Heart right ventricle (tissue), 16 donors: ENCODE measurements at regions of chr14 and their contacts with region 1.

Region 1: DNA sequence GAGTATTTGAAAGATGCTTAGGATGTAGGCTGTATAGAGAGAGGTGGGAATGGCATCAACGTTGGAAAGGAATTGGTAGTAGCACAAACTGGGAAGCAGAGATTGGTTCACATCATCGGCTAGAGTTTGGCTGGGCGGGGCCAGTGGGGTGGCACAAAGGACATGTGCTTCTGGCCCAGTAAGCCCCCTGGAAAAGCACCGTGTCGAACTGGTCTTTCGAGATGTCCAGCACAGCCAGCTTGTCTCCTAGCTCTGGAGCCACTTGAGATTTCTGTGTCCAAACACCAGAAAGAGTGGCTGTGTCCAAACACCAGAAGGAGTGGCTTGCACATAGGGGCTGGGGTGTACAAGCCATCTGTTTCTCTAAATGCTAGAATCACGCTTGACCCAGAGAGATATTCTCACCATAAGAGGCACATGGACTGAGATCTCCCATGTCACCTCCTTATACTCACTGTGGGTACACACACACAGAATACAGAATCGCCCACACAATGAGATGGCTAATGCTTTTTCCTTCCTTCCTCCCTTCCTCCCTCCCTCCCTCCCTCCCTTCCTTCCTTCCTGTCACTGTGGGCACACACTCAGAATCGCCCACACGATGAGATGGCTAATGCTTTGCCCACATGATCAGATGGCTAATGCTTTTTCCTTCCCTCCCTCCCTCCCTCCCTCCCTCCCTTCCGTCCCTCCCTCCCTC is 41.8 kb upstream of the KCNK13 start:
- DNase-seq: no peak
- ATAC-seq: no peak
- H3K4me3 ChIP-seq: no peak overlapping the region
- H3K27ac ChIP-seq: no peak overlapping the region
- H3K4me1 ChIP-seq: peaks cover 0 to 3% (median 0%) of the 10 kb centered on the region in 9 donors
- H3K27me3 ChIP-seq: no peaks in the 10 kb centered on the region
- CTCF ChIP-seq: no peak

Region 2: DNA sequence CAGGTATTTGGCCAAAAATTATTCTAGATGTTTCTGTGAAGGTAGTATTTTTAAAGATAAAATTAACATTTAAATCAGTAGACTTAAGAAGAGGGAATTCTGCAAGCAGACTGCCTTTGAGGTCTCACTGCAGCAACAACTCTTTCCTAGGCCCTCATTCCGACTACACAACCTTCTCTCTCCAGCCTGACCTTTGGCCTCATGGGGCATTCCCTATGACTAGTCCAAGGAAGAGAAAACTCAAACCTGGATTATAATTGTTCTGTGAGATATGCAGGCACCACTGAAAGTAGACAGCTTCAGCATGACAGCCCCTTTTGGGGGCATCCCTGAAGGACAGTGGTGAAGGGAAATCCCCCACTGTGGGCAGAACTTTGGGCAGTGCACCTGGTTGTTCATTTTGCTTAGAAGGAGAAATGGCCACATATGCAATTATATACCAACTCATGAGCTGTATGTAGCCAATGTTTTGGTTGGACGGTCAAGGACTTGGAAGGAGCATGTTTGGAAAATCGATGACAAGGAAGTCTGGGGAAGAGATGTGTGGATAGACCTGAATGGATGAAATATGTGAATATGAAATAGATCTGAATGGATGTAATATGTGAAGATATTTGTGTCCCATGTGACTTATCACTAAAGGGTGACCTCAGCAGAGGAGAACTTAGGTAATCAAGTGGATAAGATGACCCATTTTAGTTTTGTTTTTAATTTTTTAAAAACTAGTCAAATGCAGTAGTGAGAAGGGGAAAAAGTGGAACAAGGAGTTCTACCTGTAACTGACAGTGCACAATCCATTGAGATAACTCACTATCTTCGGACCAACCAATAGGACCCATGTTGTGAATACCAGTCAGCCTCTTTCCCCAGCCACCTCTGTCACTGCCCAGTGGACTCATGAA is 369.6 kb before region 1 on chr14:
- intact Hi-C with region 1: loop called in 1 of 10 experiments (anchors 10 kb)
- DNase-seq: no peak
- ATAC-seq: no peak
- H3K4me3 ChIP-seq: no peak overlapping the region
- H3K27ac ChIP-seq: no peak overlapping the region
- H3K4me1 ChIP-seq: no peaks in the 10 kb centered on the region
- H3K27me3 ChIP-seq: no peaks in the 10 kb centered on the region
- CTCF ChIP-seq: no peak

Region 3: GRCh38 chr14:89954070-89955028 is 65.6 kb before region 1 on chr14 and contains the start of gene EFCAB11:
- intact Hi-C with region 1: no loop called
- DNase-seq: peak; percentile 95 to 98
- ATAC-seq: peak; percentile 95 to 98 (median 98)
- H3K4me3 ChIP-seq: peak within 1 kb of the TSS; percentile 59 to 99 (median 84)
- H3K27ac ChIP-seq: peak within 1 kb of the TSS in 9 of 10 donors; percentile 62 to 94 (median 78)
- H3K4me1 ChIP-seq: peaks cover 0 to 28% (median 13%) of the 10 kb centered on the region in 9 donors
- H3K27me3 ChIP-seq: no peaks in the 10 kb centered on the region
- CTCF ChIP-seq: no peak
- total RNA-seq, gene EFCAB11: 2.4 to 6.7 (median 3.6) TPM

Region 4: DNA sequence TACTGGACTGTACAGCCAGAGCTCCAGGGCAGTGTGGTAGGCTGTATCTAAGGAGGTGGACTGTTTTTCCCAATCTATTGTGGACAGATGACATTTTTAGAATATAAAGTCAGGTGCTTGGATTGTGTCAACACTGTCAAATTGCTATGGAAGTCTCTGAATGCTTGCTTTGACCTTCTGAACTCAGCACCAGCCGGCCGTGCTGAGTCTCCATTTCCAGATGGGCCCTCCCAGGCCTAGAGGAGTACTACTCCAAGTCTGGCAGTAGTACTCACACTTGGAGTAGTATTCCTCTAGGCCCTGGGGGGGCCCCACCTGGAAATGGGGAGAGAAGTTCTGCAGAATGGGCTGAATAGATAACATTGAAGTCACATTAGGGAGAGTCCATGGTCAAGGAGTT is 25.6 kb after region 1 on chr14:
- intact Hi-C with region 1: no loop called
- DNase-seq: no peak
- ATAC-seq: no peak
- H3K4me3 ChIP-seq: no peak overlapping the region
- H3K27ac ChIP-seq: no peak overlapping the region
- H3K4me1 ChIP-seq: peaks cover 0 to 5% (median 0%) of the 10 kb centered on the region in 9 donors
- H3K27me3 ChIP-seq: peaks cover 0 to 4% (median 0%) of the 10 kb centered on the region in 7 donors
- CTCF ChIP-seq: no peak